ENCODE measurements at regions of chr3 and their contacts with region 1.

Region 1: DNA sequence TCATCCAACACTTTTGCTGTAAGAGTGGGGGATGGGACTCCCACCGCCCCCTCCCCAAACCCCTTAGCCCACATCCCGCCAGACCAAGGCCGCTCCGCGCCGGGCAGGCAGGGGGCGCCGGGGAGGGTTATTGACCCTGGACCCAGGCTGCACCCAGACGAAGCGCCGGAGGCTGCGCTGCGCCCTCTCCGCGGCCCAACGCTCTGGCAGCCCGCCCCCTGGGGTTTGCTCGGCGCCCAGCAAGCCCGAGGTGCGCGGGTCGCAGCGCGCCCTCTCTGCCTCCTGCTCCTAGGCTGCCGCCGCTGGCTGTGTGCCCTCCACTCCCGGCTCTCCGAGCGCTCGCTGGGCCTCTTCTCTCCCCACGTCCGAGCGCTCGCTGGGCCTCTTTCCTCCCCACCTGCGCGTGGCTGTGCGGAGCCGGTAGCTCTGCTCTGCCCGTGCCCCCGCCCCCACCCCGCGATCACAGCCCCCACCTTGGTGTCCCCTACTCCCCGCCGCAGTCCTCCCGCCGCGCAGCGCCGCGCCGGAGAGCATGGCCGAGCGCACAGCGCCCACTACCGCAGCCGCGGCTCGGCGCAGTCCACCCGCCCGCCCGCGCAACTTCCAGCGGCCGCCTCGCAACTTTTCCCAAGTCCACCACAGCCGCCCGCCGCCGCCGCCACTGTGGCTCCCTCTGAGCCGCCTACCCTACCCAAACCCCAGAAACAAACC is 1.2 kb downstream of the MECOM start:
- DNase-seq: peak; percentile 72 to 80 (median 76)
- ATAC-seq: peak; percentile 95
- H3K4me3 ChIP-seq: peak overlapping the region; percentile 53
- H3K27ac ChIP-seq: no peak overlapping the region
- H3K4me1 ChIP-seq: peaks cover 6 to 26% of the 10 kb centered on the region in 2 experiments; a peak in 4 of 5 replicates
- H3K27me3 ChIP-seq: peaks cover 56 to 61% of the 10 kb centered on the region in 2 experiments
- CTCF ChIP-seq: peak; percentile 59 to 98 (median 62); a peak in 5 of 6 replicates
- EP300 ChIP-seq: no peak
- POLR2A ChIP-seq: no peak
- RAD21 ChIP-seq: peak; percentile 27 to 30; a peak in 3 of 4 replicates

Region 2: DNA sequence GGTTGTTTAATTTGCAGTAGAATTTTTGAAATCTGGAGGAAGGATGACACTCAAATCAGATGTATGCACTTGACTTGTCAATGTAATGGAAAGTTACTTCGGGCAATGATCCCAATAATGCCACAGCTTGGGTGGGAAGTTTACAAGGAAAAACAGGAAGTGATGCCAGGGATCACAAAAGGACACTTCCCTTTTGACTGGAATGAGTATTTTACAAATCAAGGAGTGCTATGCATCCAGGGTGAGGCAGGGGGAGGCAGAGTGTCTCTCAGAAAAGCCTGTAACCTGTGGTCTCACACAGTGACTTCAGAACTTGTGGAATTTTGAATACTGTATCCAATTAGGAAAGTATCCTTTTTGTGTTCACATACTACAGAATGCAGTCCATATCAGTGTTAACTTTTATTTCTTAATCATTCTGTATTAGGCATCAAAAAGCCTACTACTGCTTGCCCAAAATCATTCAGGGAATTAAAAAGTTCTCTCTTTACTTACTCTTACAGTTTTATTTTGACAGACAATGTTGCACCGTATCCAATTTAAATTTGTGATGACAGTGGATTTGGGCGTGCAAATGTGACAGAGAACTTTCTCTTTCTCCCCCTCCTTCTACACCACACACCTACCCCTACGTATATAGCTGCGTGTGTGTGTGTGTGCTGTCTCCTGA is 443.8 kb before region 1 on chr3:
- CTCF ChIA-PET with region 1: no interaction called
- POLR2A ChIA-PET with region 1: no interaction called
- in situ Hi-C with region 1: no loop called
- intact Hi-C with region 1: loop called (anchors 5 kb)
- DNase-seq: peak in 2 of 4 experiments; percentile 22 to 25
- ATAC-seq: peak; percentile 86
- H3K4me3 ChIP-seq: no peak overlapping the region
- H3K27ac ChIP-seq: no peak overlapping the region
- H3K4me1 ChIP-seq: no peaks in the 10 kb centered on the region
- H3K27me3 ChIP-seq: no peaks in the 10 kb centered on the region
- CTCF ChIP-seq: peak; percentile 56 to 57 (median 56); a peak in 5 of 6 replicates
- EP300 ChIP-seq: no peak
- POLR2A ChIP-seq: no peak
- RAD21 ChIP-seq: peak; percentile 33 to 59

Region 3: DNA sequence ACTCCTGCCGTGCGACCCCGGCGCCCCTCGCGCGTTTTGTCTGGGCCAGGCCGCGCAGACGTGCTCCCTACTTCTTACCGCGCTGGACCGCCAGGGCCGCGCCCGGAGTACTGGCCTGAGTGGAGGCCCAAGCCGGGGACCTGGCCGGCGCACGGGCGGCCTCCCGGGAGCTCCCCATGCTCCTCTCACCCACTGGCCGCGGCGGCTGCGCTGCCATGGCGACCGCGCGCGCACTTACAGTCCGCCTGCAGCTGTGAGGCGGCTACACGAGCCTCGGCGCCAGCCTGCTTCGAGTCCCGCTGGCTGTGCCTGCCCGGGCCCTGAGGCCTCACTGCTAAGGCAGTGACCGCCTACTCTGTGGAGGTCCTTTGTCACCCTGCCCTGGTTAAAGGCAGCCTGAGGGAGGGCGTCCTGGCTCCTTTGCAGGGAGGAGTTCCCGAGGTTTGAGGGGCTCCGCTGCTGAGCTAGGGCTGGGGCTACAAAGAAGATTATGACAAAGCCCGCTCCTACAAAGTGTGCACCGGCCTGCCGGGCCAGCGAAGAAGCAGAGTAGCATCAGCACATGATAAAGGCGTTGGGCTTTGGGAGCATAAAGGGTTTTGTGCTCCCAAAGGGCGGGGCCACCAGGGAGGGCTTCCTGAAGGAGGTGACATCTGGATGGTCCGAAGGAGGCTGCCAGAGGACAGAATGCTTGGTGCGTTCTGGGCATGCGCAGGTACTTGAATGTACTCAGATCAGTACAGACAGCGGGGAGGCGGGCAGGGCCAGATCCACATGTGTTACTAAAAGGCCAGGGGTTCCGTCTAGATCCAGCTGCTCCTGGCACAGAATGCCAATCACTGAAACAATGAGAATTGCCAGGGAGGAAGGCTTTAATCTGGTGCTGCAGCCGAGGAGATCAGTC is 150.3 kb after region 1 on chr3 and contains the starts of genes LRRC34 and LRRIQ4:
- CTCF ChIA-PET with region 1: no interaction called
- POLR2A ChIA-PET with region 1: no interaction called
- in situ Hi-C with region 1: no loop called
- intact Hi-C with region 1: no loop called
- DNase-seq: no peak
- ATAC-seq: no peak
- H3K4me3 ChIP-seq: no peak within 1 kb of the TSS
- H3K27ac ChIP-seq: no peak within 1 kb of the TSS
- H3K4me1 ChIP-seq: no peaks in the 10 kb centered on the region; a peak in 1 of 5 replicates
- H3K27me3 ChIP-seq: no peaks in the 10 kb centered on the region
- CTCF ChIP-seq: no peak
- EP300 ChIP-seq: no peak
- POLR2A ChIP-seq: no peak
- RAD21 ChIP-seq: no peak
- polyA plus RNA-seq, gene LRRC34: 0.17 to 0.30 TPM
- polyA plus RNA-seq, gene LRRIQ4: not detected

Region 4: GRCh38 chr3:170414202-170414663 is 751.9 kb after region 1 on chr3:
- CTCF ChIA-PET with region 1: no interaction called
- POLR2A ChIA-PET with region 1: no interaction called
- in situ Hi-C with region 1: no loop called
- intact Hi-C with region 1: no loop called
- DNase-seq: peak; percentile 58 to 75 (median 63)
- ATAC-seq: peak; percentile 85
- H3K4me3 ChIP-seq: no peak overlapping the region
- H3K27ac ChIP-seq: no peak overlapping the region
- H3K4me1 ChIP-seq: peaks cover 0 to 9% of the 10 kb centered on the region in 2 experiments; a peak in 1 of 5 replicates
- H3K27me3 ChIP-seq: no peaks in the 10 kb centered on the region
- CTCF ChIP-seq: peak; percentile 91 to 98 (median 93)
- EP300 ChIP-seq: no peak
- POLR2A ChIP-seq: no peak
- RAD21 ChIP-seq: peak; percentile 99